ENCODE measurements at regions of chr2 and their contacts with region 1.

Region 1: DNA sequence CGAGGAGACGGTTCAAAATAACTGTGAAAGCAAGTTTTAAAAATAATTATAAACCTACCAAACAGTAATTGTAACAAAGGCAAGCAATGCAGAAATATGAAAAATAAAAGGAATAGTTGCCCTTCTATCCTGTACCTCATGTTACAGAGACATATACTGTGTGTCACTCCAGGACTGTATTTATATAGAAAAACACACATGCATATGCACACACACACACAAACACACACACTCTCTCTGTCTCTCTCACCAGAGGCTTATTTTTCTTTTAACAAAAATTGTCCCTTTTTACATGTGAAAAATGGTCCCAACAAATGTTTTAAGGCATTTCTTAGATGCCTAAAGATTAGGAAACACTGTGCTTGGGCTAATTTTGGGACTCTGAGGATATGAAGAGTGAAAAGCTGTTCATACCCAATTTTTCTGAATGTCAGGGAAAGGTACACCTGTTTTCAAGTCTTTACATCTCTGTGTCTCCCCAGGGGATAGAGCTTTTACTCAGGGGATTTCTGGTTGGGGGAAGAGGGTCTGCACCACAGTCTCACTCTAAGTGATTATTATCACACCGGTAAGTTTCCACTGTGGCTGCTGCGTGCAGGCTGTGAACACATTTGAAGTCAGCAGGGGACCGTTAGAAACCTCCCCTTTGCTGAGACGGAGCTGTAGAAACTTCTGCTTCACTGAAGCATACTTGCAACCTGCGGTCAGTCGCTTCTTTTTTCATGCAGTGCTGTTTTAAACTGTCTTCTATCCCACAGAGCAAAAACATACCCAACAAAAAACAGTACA is 51.4 kb upstream of the SPAG16 start:
- DNase-seq: peak; percentile 50
- ATAC-seq: peak; percentile 95
- H3K4me3 Mint-ChIP-seq: peak overlapping the region; percentile 64
- H3K27ac Mint-ChIP-seq: peak overlapping the region; percentile 85
- H3K4me1 Mint-ChIP-seq: peaks cover 81% of the 10 kb centered on the region
- H3K27me3 Mint-ChIP-seq: no peaks in the 10 kb centered on the region
- CTCF ChIP-seq: no peak

Region 2: DNA sequence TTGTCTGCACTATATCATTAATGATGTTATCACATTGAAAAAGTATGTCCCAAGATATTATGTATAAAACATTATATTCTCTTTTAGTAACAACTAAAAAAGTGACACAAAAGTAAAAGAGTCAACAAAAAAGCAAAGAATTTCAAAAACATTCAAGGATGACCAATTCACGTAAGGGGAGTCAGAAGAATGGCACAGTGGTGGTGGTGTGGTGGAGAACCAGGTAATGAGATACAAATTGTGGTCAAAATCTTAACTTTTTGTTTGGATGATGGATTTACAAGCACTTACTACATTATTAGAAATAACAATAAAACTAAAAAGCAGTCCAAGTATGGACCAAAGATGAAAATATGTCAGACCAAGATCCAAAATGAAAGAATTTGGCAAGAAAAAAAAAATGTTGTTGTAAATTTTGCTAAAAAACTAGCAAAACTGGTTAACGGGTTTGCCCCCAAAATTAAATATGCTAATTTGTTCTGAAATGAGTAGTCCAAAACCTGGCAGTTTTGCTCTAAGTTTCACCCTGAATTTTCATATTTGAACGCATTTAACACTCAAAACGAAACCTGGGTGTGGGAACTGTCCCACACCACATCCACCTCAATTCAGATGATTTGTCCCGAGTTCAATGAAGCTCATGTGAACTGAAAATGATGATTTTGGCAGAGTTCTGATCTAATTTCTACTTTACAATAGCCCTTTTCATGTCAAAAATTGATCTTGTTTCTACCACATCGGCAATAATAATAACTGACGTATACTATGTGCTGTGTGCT is 217.3 kb before region 1 on chr2:
- CTCF ChIA-PET with region 1: no interaction called
- POLR2A ChIA-PET with region 1: no interaction called
- intact Hi-C with region 1: loop called (anchors 5 kb)
- DNase-seq: no peak
- ATAC-seq: peak; percentile 86
- H3K4me3 Mint-ChIP-seq: peak overlapping the region; percentile 68
- H3K27ac Mint-ChIP-seq: peak overlapping the region; percentile 85
- H3K4me1 Mint-ChIP-seq: peaks cover 38% of the 10 kb centered on the region
- H3K27me3 Mint-ChIP-seq: no peaks in the 10 kb centered on the region
- CTCF ChIP-seq: no peak

Region 3: GRCh38 chr2:213036836-213037235 is 196.0 kb before region 1 on chr2:
- CTCF ChIA-PET with region 1: no interaction called
- POLR2A ChIA-PET with region 1: no interaction called
- intact Hi-C with region 1: loop called (anchors 1 kb)
- DNase-seq: no peak
- ATAC-seq: no peak
- H3K4me3 Mint-ChIP-seq: no peak overlapping the region
- H3K27ac Mint-ChIP-seq: no peak overlapping the region
- H3K4me1 Mint-ChIP-seq: peaks cover 57% of the 10 kb centered on the region
- H3K27me3 Mint-ChIP-seq: no peaks in the 10 kb centered on the region
- CTCF ChIP-seq: no peak

Region 4: DNA sequence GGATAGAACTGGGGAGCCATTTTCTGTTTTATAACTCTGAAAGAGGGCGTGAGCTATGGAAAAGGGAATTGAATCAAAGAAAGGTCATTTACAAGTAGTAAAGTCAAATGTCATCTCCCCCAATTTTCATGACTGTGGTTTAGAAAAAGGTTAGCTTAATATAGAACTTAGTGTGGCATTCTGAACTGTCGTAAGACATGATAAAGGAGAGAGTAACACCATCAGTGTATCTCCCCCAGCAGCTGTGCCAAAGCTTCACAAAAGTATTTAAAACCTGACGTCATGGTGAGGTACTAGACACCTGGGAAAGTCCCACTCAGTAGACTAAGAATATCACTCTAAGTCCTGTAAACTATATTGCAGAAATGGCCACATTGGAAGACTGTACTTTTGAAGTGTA is 75.6 kb before region 1 on chr2:
- CTCF ChIA-PET with region 1: interaction called, 13 read pairs
- POLR2A ChIA-PET with region 1: interaction called, 52 read pairs
- intact Hi-C with region 1: loop called (anchors 1 kb)
- DNase-seq: no peak
- ATAC-seq: peak; percentile 88
- H3K4me3 Mint-ChIP-seq: peak overlapping the region; percentile 49
- H3K27ac Mint-ChIP-seq: peak overlapping the region; percentile 80
- H3K4me1 Mint-ChIP-seq: peaks cover 58% of the 10 kb centered on the region
- H3K27me3 Mint-ChIP-seq: no peaks in the 10 kb centered on the region
- CTCF ChIP-seq: no peak

Region 5: GRCh38 chr2:213166109-213166508 is 66.7 kb before region 1 on chr2:
- CTCF ChIA-PET with region 1: no interaction called
- POLR2A ChIA-PET with region 1: interaction called, 10 read pairs
- intact Hi-C with region 1: loop called (anchors 1 kb)
- DNase-seq: no peak
- ATAC-seq: peak; percentile 86
- H3K4me3 Mint-ChIP-seq: peak overlapping the region; percentile 30
- H3K27ac Mint-ChIP-seq: peak overlapping the region; percentile 93
- H3K4me1 Mint-ChIP-seq: peaks cover 40% of the 10 kb centered on the region
- H3K27me3 Mint-ChIP-seq: no peaks in the 10 kb centered on the region
- CTCF ChIP-seq: no peak

Region 6: GRCh38 chr2:213284105-213285090 is 51.6 kb after region 1 on chr2 and contains the start of gene SPAG16:
- CTCF ChIA-PET with region 1: no interaction called
- POLR2A ChIA-PET with region 1: interaction called, 7 read pairs
- intact Hi-C with region 1: loop called (anchors 1 kb)
- DNase-seq: peak; percentile 89
- ATAC-seq: peak; percentile 98
- H3K4me3 Mint-ChIP-seq: peak within 1 kb of the TSS; percentile 96
- H3K27ac Mint-ChIP-seq: peak within 1 kb of the TSS; percentile 87
- H3K4me1 Mint-ChIP-seq: peaks cover 24% of the 10 kb centered on the region
- H3K27me3 Mint-ChIP-seq: no peaks in the 10 kb centered on the region
- CTCF ChIP-seq: no peak
- total RNA-seq, gene SPAG16: 11.2 and 11.5 TPM in 2 replicates

Measured in activated B cell treated with CpG ODN at 0.5 μM for 24 hours (primary cell).